ENCODE measurements at regions of chr15 and their contacts with region 1.

Region 1: GRCh38 chr15:41972253-41973242 is at the start of gene EHD4:
- DNase-seq: peak; percentile 85 to 96 (median 94)
- ATAC-seq: peak; percentile 91
- H3K4me3 ChIP-seq: peak within 1 kb of the TSS; percentile 87
- H3K4me3 Mint-ChIP-seq: peak within 1 kb of the TSS; percentile 85 to 97 (median 94)
- H3K27ac ChIP-seq: peak within 1 kb of the TSS; percentile 83
- H3K27ac Mint-ChIP-seq: peak within 1 kb of the TSS; percentile 90 to 97 (median 95)
- H3K4me1 ChIP-seq: peaks cover 19 to 23% of the 10 kb centered on the region in 2 donors
- H3K4me1 Mint-ChIP-seq: peaks cover 31 to 55% (median 45%) of the 10 kb centered on the region in 7 donors
- H3K27me3 ChIP-seq: no peaks in the 10 kb centered on the region
- H3K27me3 Mint-ChIP-seq: peaks cover 0 to 17% (median 7%) of the 10 kb centered on the region in 5 donors
- total RNA-seq, gene EHD4: 10.4 to 48.3 (median 23.7) TPM

Region 2: GRCh38 chr15:41894791-41895463 is 77.6 kb before region 1 on chr15:
- CTCF ChIA-PET with region 1: no interaction called
- POLR2A ChIA-PET with region 1: interaction called, 4 read pairs
- intact Hi-C with region 1: loop called in 1 of 2 experiments (anchors 1 kb)
- DNase-seq: peak; percentile 67 to 88 (median 80)
- ATAC-seq: peak; percentile 98
- H3K4me3 ChIP-seq: peak overlapping the region; percentile 27
- H3K4me3 Mint-ChIP-seq: peak overlapping the region; percentile 37 to 78 (median 70)
- H3K27ac ChIP-seq: peak overlapping the region; percentile 80
- H3K27ac Mint-ChIP-seq: peak overlapping the region; percentile 91 to 99 (median 97)
- H3K4me1 ChIP-seq: peaks cover 30 to 35% of the 10 kb centered on the region in 2 donors
- H3K4me1 Mint-ChIP-seq: peaks cover 14 to 46% (median 38%) of the 10 kb centered on the region in 7 donors
- H3K27me3 ChIP-seq: no peaks in the 10 kb centered on the region
- H3K27me3 Mint-ChIP-seq: no peaks in the 10 kb centered on the region

Region 3: GRCh38 chr15:41936649-41937567 is 35.6 kb before region 1 on chr15:
- CTCF ChIA-PET with region 1: interaction called, 4 read pairs
- POLR2A ChIA-PET with region 1: interaction called, 76 read pairs
- intact Hi-C with region 1: loop called (anchors 1 kb)
- DNase-seq: peak; percentile 39 to 85 (median 79)
- ATAC-seq: peak; percentile 86
- H3K4me3 ChIP-seq: peak overlapping the region; percentile 36
- H3K4me3 Mint-ChIP-seq: peak overlapping the region; percentile 63 to 89 (median 82)
- H3K27ac ChIP-seq: peak overlapping the region; percentile 83
- H3K27ac Mint-ChIP-seq: peak overlapping the region; percentile 93 to 100 (median 98)
- H3K4me1 ChIP-seq: peaks cover 50 to 53% of the 10 kb centered on the region in 2 donors
- H3K4me1 Mint-ChIP-seq: peaks cover 41 to 72% (median 65%) of the 10 kb centered on the region in 7 donors
- H3K27me3 ChIP-seq: no peaks in the 10 kb centered on the region
- H3K27me3 Mint-ChIP-seq: no peaks in the 10 kb centered on the region

Region 4: DNA sequence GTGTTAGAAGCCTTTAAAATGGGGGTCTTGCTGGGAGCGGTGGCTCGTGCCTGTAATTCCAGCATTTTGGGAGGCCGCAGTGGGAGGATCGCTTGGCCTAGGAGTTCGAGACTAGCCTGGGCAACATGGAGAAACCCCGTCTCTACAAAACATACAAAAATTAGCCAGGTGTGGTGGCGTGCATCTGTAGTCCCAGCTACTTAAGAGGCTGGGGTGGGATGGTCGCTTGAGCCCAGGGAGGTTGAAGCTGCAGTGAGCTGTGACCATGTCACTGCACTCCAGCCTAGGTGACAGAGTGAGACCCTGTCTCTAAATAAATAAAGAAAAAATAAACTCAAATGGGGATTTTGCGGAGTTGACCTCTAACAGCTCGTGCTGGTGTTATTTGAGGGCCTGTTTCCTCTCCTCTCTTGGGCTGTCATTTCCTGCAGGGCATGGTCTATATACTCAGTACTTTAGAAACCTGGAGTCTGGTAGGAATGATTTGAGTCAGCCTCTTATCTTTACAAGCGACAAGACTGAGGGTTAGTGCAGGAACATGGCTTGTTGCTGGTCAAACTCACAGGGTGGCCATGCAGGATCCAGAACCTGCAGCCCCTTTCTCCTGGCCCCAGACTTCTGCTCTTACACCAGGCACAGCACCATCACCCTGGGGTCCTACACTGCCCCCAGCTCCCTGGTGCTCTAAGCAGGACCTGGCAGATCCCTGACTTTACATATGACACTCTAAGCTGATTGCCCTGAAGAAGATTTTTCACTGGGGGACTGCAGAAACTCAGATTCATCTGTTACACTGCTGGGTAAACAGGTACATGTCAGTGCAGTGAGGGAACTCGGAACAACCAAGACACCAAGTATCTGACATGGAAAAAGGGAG is 15.3 kb before region 1 on chr15:
- CTCF ChIA-PET with region 1: interaction called, 4 read pairs
- POLR2A ChIA-PET with region 1: no interaction called
- intact Hi-C with region 1: loop called in 1 of 2 experiments (anchors 2 kb)
- DNase-seq: no peak
- ATAC-seq: no peak
- H3K4me3 ChIP-seq: no peak overlapping the region
- H3K4me3 Mint-ChIP-seq: peak overlapping the region in 1 of 10 donors; percentile 10
- H3K27ac ChIP-seq: no peak overlapping the region
- H3K27ac Mint-ChIP-seq: peak overlapping the region in 2 of 9 donors; percentile 17 to 36
- H3K4me1 ChIP-seq: no peaks in the 10 kb centered on the region
- H3K4me1 Mint-ChIP-seq: peaks cover 1 to 37% (median 13%) of the 10 kb centered on the region in 7 donors
- H3K27me3 ChIP-seq: no peaks in the 10 kb centered on the region
- H3K27me3 Mint-ChIP-seq: no peaks in the 10 kb centered on the region

Region 5: DNA sequence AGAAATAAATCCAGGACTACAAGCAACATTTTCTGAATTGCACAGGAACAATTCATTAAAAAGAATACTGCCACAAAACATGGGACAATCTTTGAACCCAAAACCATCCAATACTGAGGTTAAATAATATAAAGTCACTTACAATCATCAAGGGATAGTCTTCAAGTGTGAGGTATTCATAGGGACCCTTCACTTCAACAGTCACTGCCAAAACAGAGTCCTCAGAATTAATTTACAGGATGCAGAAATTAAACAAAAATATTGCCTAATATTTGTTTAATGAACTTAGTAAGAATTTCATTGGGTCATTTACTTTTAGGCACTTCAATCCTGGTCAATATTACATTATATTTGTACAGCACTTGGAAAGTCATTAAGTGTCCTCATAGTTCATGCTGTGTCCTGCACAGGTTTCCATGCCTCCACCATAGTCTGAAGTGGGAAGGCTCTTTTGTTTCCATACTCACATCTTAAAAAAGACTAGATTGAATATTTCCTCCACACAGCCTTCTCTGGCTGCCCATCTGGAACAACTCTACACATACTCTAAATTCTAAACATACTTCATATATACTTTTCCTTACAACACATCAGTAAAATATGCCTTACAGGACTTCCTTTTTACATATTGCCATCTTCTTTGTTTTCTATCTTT is 267.1 kb after region 1 on chr15:
- CTCF ChIA-PET with region 1: no interaction called
- POLR2A ChIA-PET with region 1: no interaction called
- intact Hi-C with region 1: no loop called
- DNase-seq: no peak
- ATAC-seq: no peak
- H3K4me3 ChIP-seq: no peak overlapping the region
- H3K4me3 Mint-ChIP-seq: no peak overlapping the region
- H3K27ac ChIP-seq: no peak overlapping the region
- H3K27ac Mint-ChIP-seq: peak overlapping the region in 3 of 9 donors; percentile 11 to 56 (median 29)
- H3K4me1 ChIP-seq: no peaks in the 10 kb centered on the region
- H3K4me1 Mint-ChIP-seq: peaks cover 2 to 21% (median 12%) of the 10 kb centered on the region in 7 donors
- H3K27me3 ChIP-seq: no peaks in the 10 kb centered on the region
- H3K27me3 Mint-ChIP-seq: no peaks in the 10 kb centered on the region

Region 6: GRCh38 chr15:43121863-43122262 is 1149.3 kb after region 1 on chr15:
- CTCF ChIA-PET with region 1: no interaction called
- POLR2A ChIA-PET with region 1: no interaction called
- intact Hi-C with region 1: loop called in 1 of 2 experiments (anchors 5 kb)
- DNase-seq: no peak
- ATAC-seq: no peak
- H3K4me3 ChIP-seq: no peak overlapping the region
- H3K4me3 Mint-ChIP-seq: peak overlapping the region in 9 of 10 donors; percentile 46 to 91 (median 85)
- H3K27ac ChIP-seq: no peak overlapping the region
- H3K27ac Mint-ChIP-seq: no peak overlapping the region
- H3K4me1 ChIP-seq: peaks cover 0 to 9% of the 10 kb centered on the region in 2 donors
- H3K4me1 Mint-ChIP-seq: peaks cover 8 to 23% (median 16%) of the 10 kb centered on the region in 7 donors
- H3K27me3 ChIP-seq: no peaks in the 10 kb centered on the region
- H3K27me3 Mint-ChIP-seq: peaks cover 0 to 43% (median 5%) of the 10 kb centered on the region in 5 donors

Measured in naive thymus-derived CD4-positive, alpha-beta T cell (primary cell).